CD8-positive, alpha-beta T cell (primary cell): ENCODE measurements at regions of chr17 and their contacts with region 1.

Region 1: GRCh38 chr17:27430882-27431491 is 25.3 kb upstream of the KSR1 start:
- DNase-seq: no peak
- ATAC-seq: no peak
- H3K4me3 ChIP-seq: no peak overlapping the region
- H3K4me3 Mint-ChIP-seq: no peak overlapping the region
- H3K27ac ChIP-seq: no peak overlapping the region
- H3K27ac Mint-ChIP-seq: no peak overlapping the region
- H3K4me1 ChIP-seq: no peaks in the 10 kb centered on the region
- H3K4me1 Mint-ChIP-seq: no peaks in the 10 kb centered on the region
- H3K27me3 ChIP-seq: no peaks in the 10 kb centered on the region
- H3K27me3 Mint-ChIP-seq: no peaks in the 10 kb centered on the region
- CTCF ChIP-seq: no peak

Region 2: GRCh38 chr17:27381007-27381501 is 49.9 kb before region 1 on chr17:
- CTCF ChIA-PET with region 1: no interaction called
- POLR2A ChIA-PET with region 1: no interaction called
- intact Hi-C with region 1: loop called in 1 of 2 experiments (anchors 10 kb)
- DNase-seq: peak; percentile 47 to 84 (median 74)
- ATAC-seq: peak; percentile 98
- H3K4me3 ChIP-seq: no peak overlapping the region
- H3K4me3 Mint-ChIP-seq: no peak overlapping the region
- H3K27ac ChIP-seq: no peak overlapping the region
- H3K27ac Mint-ChIP-seq: no peak overlapping the region
- H3K4me1 ChIP-seq: no peaks in the 10 kb centered on the region
- H3K4me1 Mint-ChIP-seq: peaks cover 4% of the 10 kb centered on the region
- H3K27me3 ChIP-seq: no peaks in the 10 kb centered on the region
- H3K27me3 Mint-ChIP-seq: peaks cover 23% of the 10 kb centered on the region
- CTCF ChIP-seq: peak; percentile 84

Region 3: DNA sequence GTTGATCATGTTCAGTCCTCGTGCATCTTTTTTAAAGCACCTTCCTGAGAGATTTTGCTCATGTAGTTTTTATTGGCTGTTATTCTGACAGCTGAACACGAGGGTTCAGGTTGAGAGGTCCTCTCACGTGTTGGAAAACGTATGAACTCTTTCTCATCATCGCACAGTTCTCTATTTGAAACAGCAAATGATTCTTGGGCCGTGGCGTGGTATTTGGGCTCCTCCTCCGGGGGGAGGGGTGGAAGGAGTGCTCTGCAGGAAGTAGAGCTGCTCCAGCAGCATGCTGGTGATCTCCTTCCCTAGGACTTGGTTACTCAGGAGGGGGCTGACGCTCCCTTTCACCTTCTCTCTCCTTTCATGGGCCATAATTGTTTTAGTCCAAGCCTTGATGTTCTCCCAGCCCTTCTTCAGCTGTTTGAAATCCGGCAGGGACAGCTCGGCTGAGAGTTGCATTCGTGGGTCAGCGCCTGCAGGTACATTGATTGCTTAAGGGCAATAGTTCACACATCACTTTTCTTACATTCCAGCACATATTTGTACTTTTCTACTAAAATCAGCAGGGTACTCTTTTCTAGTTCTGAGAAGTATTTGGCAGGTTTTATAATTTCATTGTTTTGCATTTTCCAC is 95.7 kb after region 1 on chr17:
- CTCF ChIA-PET with region 1: no interaction called
- POLR2A ChIA-PET with region 1: no interaction called
- intact Hi-C with region 1: no loop called
- DNase-seq: peak in 3 of 9 experiments; percentile 15 to 32 (median 15)
- ATAC-seq: peak; percentile 17
- H3K4me3 ChIP-seq: no peak overlapping the region
- H3K4me3 Mint-ChIP-seq: no peak overlapping the region
- H3K27ac ChIP-seq: no peak overlapping the region
- H3K27ac Mint-ChIP-seq: no peak overlapping the region
- H3K4me1 ChIP-seq: peaks cover 9% of the 10 kb centered on the region
- H3K4me1 Mint-ChIP-seq: peaks cover 25% of the 10 kb centered on the region
- H3K27me3 ChIP-seq: no peaks in the 10 kb centered on the region
- H3K27me3 Mint-ChIP-seq: no peaks in the 10 kb centered on the region
- CTCF ChIP-seq: no peak

Region 4: DNA sequence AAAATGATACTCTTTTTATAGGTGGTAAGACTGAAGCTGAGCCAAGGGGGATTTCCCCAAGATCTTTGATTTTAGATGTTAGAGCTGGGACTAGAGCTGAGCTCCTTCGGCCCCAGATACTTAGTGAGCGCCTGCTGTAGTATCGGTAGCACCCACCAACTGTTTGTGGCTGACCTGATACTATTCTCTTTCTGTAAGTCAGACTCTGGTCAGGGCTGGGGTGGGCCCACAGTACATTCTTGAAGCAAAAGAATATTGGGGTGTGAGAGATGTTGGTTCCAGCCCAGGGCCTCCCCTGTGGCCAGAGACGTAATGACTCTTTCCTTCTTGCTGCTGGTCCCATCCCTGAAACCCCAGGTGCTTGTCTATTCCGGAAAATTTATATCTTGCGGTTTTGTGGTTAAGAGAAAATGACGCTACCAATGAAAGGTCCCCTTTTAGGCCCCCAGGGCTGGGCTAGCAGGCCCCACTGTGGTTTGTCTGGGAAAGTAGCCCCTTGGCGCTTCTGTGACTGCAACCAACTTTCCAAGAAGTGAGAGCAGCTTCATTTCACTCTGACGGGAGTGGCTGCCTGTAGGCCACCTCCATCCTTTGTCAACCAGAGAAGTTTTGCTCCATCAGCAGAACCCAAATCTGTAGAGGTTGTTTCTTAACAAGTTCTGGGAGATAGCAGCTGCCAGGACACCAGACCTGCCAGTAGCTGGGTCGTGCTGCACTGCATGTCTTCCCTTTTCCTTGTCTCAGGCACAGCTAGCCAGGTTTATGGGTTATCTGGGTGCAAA is 113.6 kb after region 1 on chr17:
- CTCF ChIA-PET with region 1: no interaction called
- POLR2A ChIA-PET with region 1: no interaction called
- intact Hi-C with region 1: loop called in 1 of 2 experiments (anchors 5 kb)
- DNase-seq: peak in 3 of 9 experiments; percentile 17 to 61 (median 44)
- ATAC-seq: peak; percentile 62
- H3K4me3 ChIP-seq: no peak overlapping the region
- H3K4me3 Mint-ChIP-seq: no peak overlapping the region
- H3K27ac ChIP-seq: no peak overlapping the region
- H3K27ac Mint-ChIP-seq: peak overlapping the region; percentile 37
- H3K4me1 ChIP-seq: peaks cover 13% of the 10 kb centered on the region
- H3K4me1 Mint-ChIP-seq: peaks cover 50% of the 10 kb centered on the region
- H3K27me3 ChIP-seq: no peaks in the 10 kb centered on the region
- H3K27me3 Mint-ChIP-seq: no peaks in the 10 kb centered on the region
- CTCF ChIP-seq: no peak